HepG2 (cell line): ENCODE measurements at regions of chr10 and their contacts with region 1.

Region 1: DNA sequence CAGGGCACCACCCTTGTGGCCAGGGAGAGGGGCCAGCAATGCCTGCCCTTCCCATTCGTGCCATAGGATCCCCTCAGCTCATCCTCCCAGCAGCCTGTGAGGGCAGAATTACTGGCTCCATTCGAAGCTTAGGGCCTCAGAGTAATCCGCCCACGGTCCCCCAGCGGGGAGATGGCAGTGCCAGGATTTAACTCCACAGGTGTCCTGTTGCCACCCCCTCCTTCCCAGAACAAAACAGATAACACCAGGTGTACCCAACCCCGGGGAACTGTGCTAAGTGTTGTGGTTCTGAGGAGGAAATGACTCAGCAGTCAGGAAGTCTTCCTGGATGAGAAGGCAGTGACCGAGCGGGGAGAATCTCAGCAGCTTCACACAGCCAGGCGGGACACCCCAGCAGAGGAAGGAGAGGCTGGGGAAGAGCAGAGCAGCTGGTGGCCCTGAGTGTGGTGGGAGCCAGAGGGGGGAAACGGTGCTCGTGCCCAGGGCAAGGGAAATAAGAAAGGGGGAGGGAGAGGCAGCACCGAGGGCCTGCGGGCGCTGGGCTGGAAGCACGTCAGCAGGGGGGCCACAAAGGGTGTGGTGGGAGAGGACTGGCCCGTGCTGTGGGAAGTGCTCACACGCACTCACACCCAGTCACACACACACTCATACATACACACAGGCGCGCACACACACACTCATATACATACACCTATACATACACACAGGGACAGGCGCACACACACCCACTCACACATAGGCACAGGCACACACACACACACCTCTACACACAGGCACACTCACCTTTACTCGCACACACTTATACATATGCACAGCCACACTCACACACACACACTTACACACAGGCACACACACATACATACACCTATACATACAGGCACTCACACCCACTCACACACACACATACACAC is 59.8 kb upstream of the CHST15 start:
- DNase-seq: peak; percentile 54
- ATAC-seq: peak; percentile 58
- H3K4me3 ChIP-seq: no peak overlapping the region; a peak in 1 of 6 replicates
- H3K27ac ChIP-seq: no peak overlapping the region
- H3K4me1 ChIP-seq: peaks cover 43% of the 10 kb centered on the region
- H3K27me3 ChIP-seq: peaks cover 0 to 8% of the 10 kb centered on the region in 2 experiments; a peak in 4 of 5 replicates
- CTCF ChIP-seq: no peak
- EP300 ChIP-seq: no peak
- POLR2A ChIP-seq: no peak
- RAD21 ChIP-seq: no peak

Region 2: GRCh38 chr10:124025660-124026588 is 127.2 kb before region 1 on chr10:
- CTCF ChIA-PET with region 1: no interaction called
- POLR2A ChIA-PET with region 1: no interaction called
- in situ Hi-C with region 1: no loop called
- intact Hi-C with region 1: loop called (anchors 10 kb)
- DNase-seq: peak; percentile 48
- ATAC-seq: peak; percentile 56
- H3K4me3 ChIP-seq: no peak overlapping the region
- H3K27ac ChIP-seq: no peak overlapping the region
- H3K4me1 ChIP-seq: peaks cover 20% of the 10 kb centered on the region; the same call in 1 of the 2 replicates
- H3K27me3 ChIP-seq: no peaks in the 10 kb centered on the region
- CTCF ChIP-seq: peak; percentile 47
- EP300 ChIP-seq: no peak
- POLR2A ChIP-seq: no peak
- RAD21 ChIP-seq: peak; percentile 30; the same call in 1 of the 2 replicates